ENCODE measurements at regions of chr3 and their contacts with region 1.

Region 1: DNA sequence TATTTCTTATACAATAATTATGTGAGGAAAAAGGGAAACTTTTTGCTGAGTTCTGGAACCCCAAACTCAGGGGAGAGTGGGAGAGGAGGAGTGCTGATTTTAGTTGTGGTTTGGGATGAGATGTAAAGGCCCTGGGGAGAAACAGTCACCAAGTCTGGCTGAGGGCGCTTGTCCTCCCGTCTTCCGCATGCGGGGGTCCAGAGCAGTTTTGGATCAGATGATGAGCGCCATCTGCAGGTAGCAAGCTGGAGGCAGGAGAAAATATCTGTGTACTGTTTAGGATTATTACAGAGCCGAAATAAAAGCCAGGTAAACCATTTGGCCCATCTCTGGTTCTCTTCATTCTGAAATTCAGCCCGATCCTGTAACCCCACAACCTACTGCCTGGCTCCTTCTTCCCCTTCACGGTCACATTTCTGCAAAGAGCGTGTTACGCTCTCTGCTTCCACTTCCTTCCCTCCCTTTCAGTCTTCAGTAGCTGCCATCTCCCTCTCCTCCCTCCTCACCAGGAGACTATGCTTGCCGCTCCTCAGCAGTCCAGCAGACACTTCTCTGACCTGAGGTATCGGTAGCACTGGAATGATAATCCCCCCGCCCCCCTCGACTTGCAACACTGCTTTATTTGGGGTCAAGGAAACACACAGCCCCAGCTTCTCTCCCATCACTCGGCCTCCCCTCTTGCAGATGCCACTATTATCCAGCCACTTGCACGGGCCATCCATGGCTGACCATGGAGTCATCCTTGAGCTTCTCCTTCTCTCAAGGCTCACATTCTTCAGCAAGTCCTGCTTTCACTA is 1.4 kb upstream of the PARP14 start:
- DNase-seq: peak; percentile 69 to 82
- ATAC-seq: peak; percentile 80 to 87
- H3K4me3 ChIP-seq: peak overlapping the region; percentile 73
- H3K27ac ChIP-seq: peak overlapping the region; percentile 92 to 95
- H3K4me1 ChIP-seq: peaks cover 17% of the 10 kb centered on the region
- CTCF ChIP-seq: peak; percentile 95
- EP300 ChIP-seq: no peak
- POLR2A ChIP-seq: no peak
- RAD21 ChIP-seq: peak; percentile 93 to 94

Region 2: DNA sequence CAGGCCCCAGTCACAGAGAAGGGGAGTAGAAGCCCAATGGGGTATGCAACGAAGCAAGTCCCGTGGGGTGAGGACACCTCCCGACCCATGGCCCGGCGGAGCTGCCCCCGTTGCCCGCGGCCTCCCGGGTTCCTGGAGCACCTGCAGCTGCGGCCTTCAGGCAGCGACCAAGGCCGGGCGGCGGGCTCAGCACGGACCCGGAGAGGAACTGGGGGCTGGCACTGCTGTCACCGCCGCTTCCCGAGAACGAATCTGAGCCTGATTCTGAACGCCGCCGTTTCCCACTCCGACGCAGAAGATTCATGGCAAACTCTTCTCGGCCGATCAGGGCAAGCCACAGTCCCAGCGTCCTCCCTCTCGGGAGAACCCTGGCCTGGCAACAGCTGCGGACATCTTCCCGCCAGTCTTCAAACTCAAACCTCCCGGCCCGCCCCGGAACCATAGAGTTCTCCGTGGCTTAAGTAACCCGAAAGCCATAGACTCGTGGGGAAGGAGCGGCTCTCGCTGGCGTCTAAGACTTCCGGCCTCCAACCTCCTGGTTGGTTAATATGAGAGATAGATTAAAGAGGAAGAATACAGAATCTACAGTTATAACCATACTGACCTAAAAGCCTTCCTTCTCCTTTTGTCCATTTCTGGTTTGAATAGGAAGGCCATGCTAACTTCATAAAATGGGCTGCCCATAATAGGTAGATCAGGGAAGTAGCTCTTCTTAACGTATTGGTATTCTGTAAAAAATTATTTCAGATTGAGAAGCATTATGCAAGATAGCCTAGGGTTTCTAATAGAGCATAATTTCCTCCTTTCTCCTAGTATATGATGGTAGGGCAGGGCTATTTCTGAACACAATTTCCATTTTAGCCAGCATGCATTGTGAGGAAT is 1133.5 kb before region 1 on chr3 and contains the start of gene POLQ:
- CTCF ChIA-PET with region 1: interaction called, 14 read pairs
- POLR2A ChIA-PET with region 1: no interaction called
- DNase-seq: peak; percentile 92 to 96
- ATAC-seq: peak; percentile 97 to 99
- H3K4me3 ChIP-seq: peak within 1 kb of the TSS; percentile 61
- H3K27ac ChIP-seq: peak within 1 kb of the TSS; percentile 71 to 90
- H3K4me1 ChIP-seq: peaks cover 11% of the 10 kb centered on the region; the same call in 2 of the 3 replicates
- CTCF ChIP-seq: no peak
- EP300 ChIP-seq: no peak
- POLR2A ChIP-seq: peak; percentile 48
- RAD21 ChIP-seq: no peak
- polyA plus RNA-seq, gene POLQ: 10.9 and 12.4 TPM in 2 replicates

Region 3: GRCh38 chr3:122415720-122416654 is 263.3 kb before region 1 on chr3 and contains the start of gene WDR5B:
- CTCF ChIA-PET with region 1: interaction called, 9 read pairs
- POLR2A ChIA-PET with region 1: interaction called, 13 read pairs
- DNase-seq: peak; percentile 98
- ATAC-seq: peak; percentile 95 to 98
- H3K4me3 ChIP-seq: peak within 1 kb of the TSS; percentile 74
- H3K27ac ChIP-seq: peak within 1 kb of the TSS; percentile 87 to 90
- H3K4me1 ChIP-seq: peaks cover 16% of the 10 kb centered on the region
- CTCF ChIP-seq: no peak
- EP300 ChIP-seq: no peak
- POLR2A ChIP-seq: peak; percentile 62
- RAD21 ChIP-seq: 0 out of 5 replicates have a peak, but pooled peaks of 1 of the 2 experiments have one; percentile 1
- polyA plus RNA-seq, gene WDR5B: 9.0 and 10.2 TPM in 2 replicates

Region 4: DNA sequence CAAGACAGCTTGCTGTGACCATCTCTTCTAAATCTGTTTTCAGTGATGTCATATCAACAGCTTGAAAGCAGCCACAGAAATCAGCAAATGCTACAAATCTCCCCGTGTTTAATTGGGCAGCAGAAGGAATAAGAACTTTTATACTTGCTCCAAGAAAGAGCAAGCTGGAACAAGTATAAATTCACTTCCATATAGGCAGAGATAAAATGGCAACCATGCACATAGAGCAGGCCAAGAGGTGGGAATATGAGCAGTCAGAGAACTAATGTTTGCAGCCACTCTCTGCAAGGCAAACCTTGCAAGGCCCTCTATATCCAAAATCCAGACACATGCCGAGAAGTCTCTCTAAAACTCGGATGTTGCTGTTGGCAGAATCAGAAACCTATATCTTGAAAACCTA is 131.2 kb before region 1 on chr3:
- CTCF ChIA-PET with region 1: interaction called, 11 read pairs
- POLR2A ChIA-PET with region 1: no interaction called
- DNase-seq: no peak
- ATAC-seq: no peak
- H3K4me3 ChIP-seq: no peak overlapping the region
- H3K27ac ChIP-seq: no peak overlapping the region
- H3K4me1 ChIP-seq: no peaks in the 10 kb centered on the region
- CTCF ChIP-seq: no peak
- EP300 ChIP-seq: no peak
- POLR2A ChIP-seq: no peak
- RAD21 ChIP-seq: no peak

Region 5: GRCh38 chr3:122564155-122564912 is 114.9 kb before region 1 on chr3 and contains the starts of genes DTX3L and PARP9:
- CTCF ChIA-PET with region 1: interaction called, 52 read pairs
- POLR2A ChIA-PET with region 1: interaction called, 12 read pairs
- DNase-seq: peak; percentile 65 to 83
- ATAC-seq: peak; percentile 95 to 96
- H3K4me3 ChIP-seq: peak within 1 kb of the TSS; percentile 65
- H3K27ac ChIP-seq: peak within 1 kb of the TSS; percentile 90 to 94
- H3K4me1 ChIP-seq: peaks cover 6% of the 10 kb centered on the region; the same call in 1 of the 3 replicates
- CTCF ChIP-seq: no peak
- EP300 ChIP-seq: no peak
- POLR2A ChIP-seq: peak; percentile 35
- RAD21 ChIP-seq: no peak; a peak in 1 of 5 replicates
- polyA plus RNA-seq, gene DTX3L: 4.2 and 6.9 TPM in 2 replicates
- polyA plus RNA-seq, gene PARP9: 11.7 and 12.6 TPM in 2 replicates

Region 6: GRCh38 chr3:122668930-122669730 is 10.2 kb before region 1 on chr3:
- CTCF ChIA-PET with region 1: interaction called, 14 read pairs
- POLR2A ChIA-PET with region 1: no interaction called
- DNase-seq: peak; percentile 22 to 24
- ATAC-seq: peak; percentile 59 to 66; a peak in 5 of 6 replicates
- H3K4me3 ChIP-seq: no peak overlapping the region
- H3K27ac ChIP-seq: no peak overlapping the region
- H3K4me1 ChIP-seq: peaks cover 8% of the 10 kb centered on the region; the same call in 1 of the 3 replicates
- CTCF ChIP-seq: no peak
- EP300 ChIP-seq: no peak
- POLR2A ChIP-seq: no peak
- RAD21 ChIP-seq: no peak

Measured in A549 (cell line).